ENCODE measurements at regions of chr9 and their contacts with region 1.

Region 1: GRCh38 chr9:137286975-137287383 is 9.5 kb downstream of the TOR4A start:
- DNase-seq: peak; percentile 72
- ATAC-seq: peak; percentile 99
- H3K4me3 ChIP-seq: no peak overlapping the region
- H3K27ac ChIP-seq: no peak overlapping the region
- H3K4me1 ChIP-seq: peaks cover 3 to 8% of the 10 kb centered on the region in 2 experiments; a peak in 2 of 4 replicates
- H3K27me3 ChIP-seq: no peaks in the 10 kb centered on the region
- CTCF ChIP-seq: peak; percentile 68 to 84 (median 69)
- POLR2A ChIP-seq: no peak
- RAD21 ChIP-seq: peak; percentile 87

Region 2: GRCh38 chr9:137200311-137201204 is 86.4 kb before region 1 on chr9 and contains the start of gene TPRN:
- CTCF ChIA-PET with region 1: no interaction called
- POLR2A ChIA-PET with region 1: no interaction called
- RAD21 ChIA-PET with region 1: no interaction called
- intact Hi-C with region 1: no loop called
- DNase-seq: peak; percentile 96
- ATAC-seq: peak; percentile 93
- H3K4me3 ChIP-seq: peak within 1 kb of the TSS; percentile 61 to 81
- H3K27ac ChIP-seq: peak within 1 kb of the TSS; percentile 85
- H3K4me1 ChIP-seq: peaks cover 32 to 54% of the 10 kb centered on the region in 2 experiments
- H3K27me3 ChIP-seq: no peaks in the 10 kb centered on the region
- CTCF ChIP-seq: no peak
- POLR2A ChIP-seq: peak; percentile 95
- RAD21 ChIP-seq: no peak
- total RNA-seq, gene TPRN: 24.9 TPM

Region 3: GRCh38 chr9:137302176-137302994 is 15.4 kb after region 1 on chr9 and contains the start of gene NRARP:
- CTCF ChIA-PET with region 1: interaction called, 16 read pairs
- POLR2A ChIA-PET with region 1: interaction called, 5 read pairs
- RAD21 ChIA-PET with region 1: interaction called in 1 of 2 experiments, 3 read pairs
- intact Hi-C with region 1: no loop called
- DNase-seq: peak; percentile 60
- ATAC-seq: peak; percentile 76
- H3K4me3 ChIP-seq: peak within 1 kb of the TSS; percentile 51 to 69
- H3K27ac ChIP-seq: peak within 1 kb of the TSS; percentile 78
- H3K4me1 ChIP-seq: peaks cover 18 to 62% of the 10 kb centered on the region in 2 experiments
- H3K27me3 ChIP-seq: no peaks in the 10 kb centered on the region
- CTCF ChIP-seq: peak in 2 of 3 experiments; percentile 47 to 57; a peak in 4 of 6 replicates
- POLR2A ChIP-seq: peak; percentile 94
- RAD21 ChIP-seq: no peak
- total RNA-seq, gene NRARP: 22.2 TPM

Region 4: DNA sequence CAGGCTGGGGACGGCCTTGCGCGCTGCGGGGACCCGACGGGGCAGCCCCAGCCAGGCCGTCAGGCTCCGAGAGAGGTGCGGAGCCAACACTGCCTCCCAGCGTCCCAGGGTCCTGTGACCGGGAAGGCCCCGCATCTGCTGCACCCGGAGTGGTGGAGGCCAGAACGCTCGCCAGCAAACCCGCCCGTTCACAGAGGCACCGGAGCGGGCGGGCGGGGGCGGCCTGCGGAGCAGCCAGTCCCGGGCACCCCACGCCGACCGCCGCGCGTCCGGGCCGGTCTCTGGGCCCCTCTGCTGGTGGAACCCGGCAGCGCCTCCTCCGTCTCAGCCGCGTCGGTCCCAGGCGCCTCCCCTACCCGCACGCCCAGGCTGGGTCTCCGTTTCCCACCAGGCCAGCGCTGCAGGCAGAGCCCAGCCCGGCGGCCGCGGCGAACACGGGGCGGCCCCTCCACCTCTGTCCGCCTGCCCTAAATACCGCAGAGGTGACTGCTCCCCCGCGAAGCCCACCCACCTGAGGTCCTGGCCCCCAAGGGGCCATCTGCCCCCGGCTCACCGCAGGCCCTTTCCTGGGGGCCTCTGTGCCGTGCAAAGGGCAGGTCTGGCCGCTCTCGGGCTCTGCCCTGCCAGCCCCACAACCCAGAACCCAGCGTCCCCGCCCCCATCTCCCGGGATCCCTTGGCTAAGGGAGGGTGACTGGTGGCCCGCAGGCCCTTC is 120.1 kb after region 1 on chr9:
- CTCF ChIA-PET with region 1: interaction called, 3 read pairs
- POLR2A ChIA-PET with region 1: no interaction called
- RAD21 ChIA-PET with region 1: interaction called in 1 of 2 experiments, 3 read pairs
- intact Hi-C with region 1: loop called (anchors 2 kb)
- DNase-seq: no peak
- ATAC-seq: peak; percentile 79
- H3K4me3 ChIP-seq: peak overlapping the region; percentile 26 to 51
- H3K27ac ChIP-seq: no peak overlapping the region; the same call in 1 of the 2 replicates
- H3K4me1 ChIP-seq: peaks cover 26 to 50% of the 10 kb centered on the region in 2 experiments
- H3K27me3 ChIP-seq: no peaks in the 10 kb centered on the region
- CTCF ChIP-seq: peak in 2 of 3 experiments; percentile 58 to 81; a peak in 4 of 6 replicates
- POLR2A ChIP-seq: no peak
- RAD21 ChIP-seq: no peak

Region 5: DNA sequence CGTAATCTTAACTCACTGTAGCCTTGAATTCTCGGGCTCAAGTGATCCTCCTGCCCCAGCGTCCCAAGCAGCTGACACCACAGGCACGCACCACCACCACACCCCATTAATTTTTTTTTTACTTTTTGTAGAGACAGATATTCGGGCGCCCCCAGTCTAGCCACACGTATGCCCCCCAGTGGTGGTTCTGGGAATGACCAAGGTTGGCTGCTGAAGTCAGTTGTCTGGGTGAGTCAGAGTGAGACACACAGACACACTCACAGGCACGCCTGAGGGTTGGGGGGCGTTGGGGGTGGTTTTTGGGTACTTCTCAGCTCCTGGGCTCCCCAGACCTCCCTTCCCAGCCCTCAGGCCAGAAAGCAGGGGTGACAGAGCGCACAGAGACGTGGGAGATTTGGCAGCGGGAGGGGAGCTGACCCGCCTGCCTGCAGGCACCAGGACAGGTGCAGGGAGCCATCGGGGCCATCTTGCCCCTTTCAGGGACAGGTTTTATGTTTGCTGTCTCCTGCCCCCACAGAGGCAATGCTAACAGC is 158.4 kb after region 1 on chr9:
- CTCF ChIA-PET with region 1: interaction called, 11 read pairs
- POLR2A ChIA-PET with region 1: no interaction called
- RAD21 ChIA-PET with region 1: interaction called in 1 of 2 experiments, 4 read pairs
- intact Hi-C with region 1: no loop called
- DNase-seq: peak; percentile 56
- ATAC-seq: peak; percentile 65
- H3K4me3 ChIP-seq: peak overlapping the region; percentile 4 to 17; a peak in 1 of 4 replicates
- H3K27ac ChIP-seq: no peak overlapping the region; the same call in 1 of the 2 replicates
- H3K4me1 ChIP-seq: peaks cover 16 to 33% of the 10 kb centered on the region in 2 experiments
- H3K27me3 ChIP-seq: no peaks in the 10 kb centered on the region
- CTCF ChIP-seq: peak; percentile 77 to 93 (median 88)
- POLR2A ChIP-seq: no peak
- RAD21 ChIP-seq: peak; percentile 84

Region 6: DNA sequence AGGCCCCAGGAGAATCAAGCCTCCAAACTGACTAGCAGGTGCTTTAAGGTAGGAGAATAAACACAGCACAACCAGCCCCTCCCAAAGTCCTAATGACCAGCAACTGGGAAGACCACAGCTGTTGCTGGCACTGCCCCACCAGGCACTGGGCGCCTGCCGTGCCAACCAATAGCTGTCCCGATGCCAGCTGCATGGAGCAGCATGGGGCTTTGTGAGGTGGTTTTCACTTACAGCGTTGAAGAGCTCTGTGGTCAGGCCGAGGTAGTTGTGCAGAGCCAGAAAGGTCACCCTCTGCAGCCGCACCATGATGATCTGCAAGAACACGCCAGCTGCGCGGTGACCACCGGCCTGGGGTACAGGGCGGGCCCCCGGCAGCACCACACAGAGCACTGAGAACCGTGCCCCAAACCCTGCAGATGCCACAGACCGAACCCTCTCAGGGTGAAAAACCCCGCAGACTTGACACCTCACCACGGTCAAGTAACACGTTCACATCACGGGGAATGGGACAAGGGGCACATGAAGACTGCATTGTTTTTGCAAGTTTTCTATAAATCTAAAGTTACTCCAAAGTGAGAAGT is 234.5 kb after region 1 on chr9:
- CTCF ChIA-PET with region 1: interaction called, 3 read pairs
- POLR2A ChIA-PET with region 1: no interaction called
- RAD21 ChIA-PET with region 1: no interaction called
- intact Hi-C with region 1: loop called (anchors 10 kb)
- DNase-seq: no peak
- ATAC-seq: no peak
- H3K4me3 ChIP-seq: no peak overlapping the region
- H3K27ac ChIP-seq: no peak overlapping the region
- H3K4me1 ChIP-seq: peaks cover 0 to 4% of the 10 kb centered on the region in 2 experiments; a peak in 1 of 4 replicates
- H3K27me3 ChIP-seq: no peaks in the 10 kb centered on the region
- CTCF ChIP-seq: no peak
- POLR2A ChIP-seq: no peak
- RAD21 ChIP-seq: no peak

Measured in HCT116 (cell line).